Pancreas (tissue), 10 donors: ENCODE measurements at regions of chr11 and their contacts with region 1.

Region 1: DNA sequence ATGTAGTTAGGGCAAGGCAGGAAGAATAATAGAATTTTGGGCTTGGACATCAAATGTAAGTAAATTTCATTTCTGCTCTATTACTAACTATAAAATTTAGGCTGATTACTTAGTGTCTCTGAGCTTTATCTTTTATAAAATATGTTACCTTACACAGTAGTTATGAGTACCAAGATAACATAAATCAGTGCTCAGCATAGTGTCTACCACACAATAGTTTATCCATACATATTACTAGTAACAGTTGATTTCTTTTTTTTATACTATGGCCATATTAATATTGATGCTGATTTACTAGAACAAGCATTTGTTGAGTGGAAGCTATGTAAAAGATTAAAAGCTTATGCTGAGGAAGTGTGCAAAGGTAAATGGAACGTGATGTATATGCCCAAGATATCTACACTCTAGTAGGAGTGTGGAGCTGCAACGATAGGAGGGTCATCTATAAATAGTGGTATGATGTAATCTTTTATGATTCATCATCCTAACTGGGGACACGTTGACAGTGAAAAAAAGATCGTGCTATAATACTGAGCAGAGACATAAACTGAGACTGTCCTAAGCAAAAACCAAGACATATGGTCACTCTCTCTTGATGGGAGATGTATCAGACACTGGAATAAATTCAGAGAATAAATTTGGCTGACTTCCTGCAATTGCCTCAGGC is 8.7 kb upstream of the SLC5A12 start:
- DNase-seq: no peak
- ATAC-seq: no peak
- H3K4me3 ChIP-seq: no peak overlapping the region
- H3K27ac ChIP-seq: no peak overlapping the region
- H3K4me1 ChIP-seq: no peaks in the 10 kb centered on the region
- H3K27me3 ChIP-seq: no peaks in the 10 kb centered on the region
- CTCF ChIP-seq: no peak

Region 2: DNA sequence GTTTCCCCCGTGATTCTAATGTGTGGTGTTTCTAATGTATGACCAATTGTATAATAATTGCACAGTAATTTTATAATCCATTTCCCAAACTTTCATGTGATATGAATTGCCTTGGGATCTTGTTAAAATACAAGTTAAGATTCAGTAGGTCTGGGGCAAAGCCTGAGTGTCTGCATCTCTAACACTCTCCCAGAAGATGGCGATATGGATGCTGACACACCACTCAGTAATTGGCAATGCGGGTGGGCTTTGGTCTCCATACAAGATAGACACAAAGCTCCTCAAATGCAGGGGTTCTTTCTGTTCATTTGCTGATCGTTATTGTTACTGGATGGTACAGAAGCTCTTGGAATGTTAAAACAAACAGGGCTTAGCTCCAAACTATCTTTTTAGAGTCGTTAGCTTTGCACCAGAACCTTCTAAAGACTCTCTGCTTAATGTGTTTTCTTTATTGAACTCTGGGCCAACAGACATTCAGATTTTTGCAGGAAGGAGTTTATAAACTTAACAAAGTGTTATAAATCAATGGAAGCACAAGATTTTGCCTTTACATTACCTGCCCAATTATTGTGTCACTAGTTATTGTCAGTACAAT is 444.0 kb before region 1 on chr11:
- intact Hi-C with region 1: no loop called
- DNase-seq: no peak
- ATAC-seq: peak in 1 of 4 donors; percentile 35
- H3K4me3 ChIP-seq: no peak overlapping the region
- H3K27ac ChIP-seq: no peak overlapping the region
- H3K4me1 ChIP-seq: no peaks in the 10 kb centered on the region
- H3K27me3 ChIP-seq: no peaks in the 10 kb centered on the region
- CTCF ChIP-seq: no peak

Region 3: DNA sequence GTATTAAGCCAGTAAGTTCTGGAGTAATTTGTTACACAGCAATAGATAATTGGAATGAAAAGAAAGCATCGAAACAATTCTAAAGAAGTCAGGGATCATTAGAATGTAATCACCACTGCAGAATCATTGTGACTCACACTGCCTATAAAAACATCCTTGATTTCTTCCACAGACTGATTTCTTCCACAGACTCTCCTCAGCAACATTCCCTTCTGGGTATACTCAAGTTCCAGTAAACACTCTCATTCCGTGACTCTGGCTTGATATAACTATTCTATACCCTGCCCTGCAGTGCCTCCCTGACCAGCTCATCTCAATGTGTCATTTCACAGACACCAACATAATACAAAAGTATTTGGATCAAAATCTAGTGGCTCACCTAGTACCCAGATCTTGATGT is 430.5 kb after region 1 on chr11:
- intact Hi-C with region 1: loop called in 1 of 3 experiments (anchors 10 kb)
- DNase-seq: no peak
- ATAC-seq: no peak
- H3K4me3 ChIP-seq: no peak overlapping the region
- H3K27ac ChIP-seq: no peak overlapping the region
- H3K4me1 ChIP-seq: no peaks in the 10 kb centered on the region
- H3K27me3 ChIP-seq: no peaks in the 10 kb centered on the region
- CTCF ChIP-seq: no peak